RWPE1 (cell line): ENCODE measurements at regions of chr12 and their contacts with region 1.

Region 1: GRCh38 chr12:53995378-53996239 is 4.4 kb upstream of the HOXC9 start:
- DNase-seq: peak; percentile 57
- H3K27ac ChIP-seq: peak overlapping the region; percentile 52
- CTCF ChIP-seq: no peak

Region 2: DNA sequence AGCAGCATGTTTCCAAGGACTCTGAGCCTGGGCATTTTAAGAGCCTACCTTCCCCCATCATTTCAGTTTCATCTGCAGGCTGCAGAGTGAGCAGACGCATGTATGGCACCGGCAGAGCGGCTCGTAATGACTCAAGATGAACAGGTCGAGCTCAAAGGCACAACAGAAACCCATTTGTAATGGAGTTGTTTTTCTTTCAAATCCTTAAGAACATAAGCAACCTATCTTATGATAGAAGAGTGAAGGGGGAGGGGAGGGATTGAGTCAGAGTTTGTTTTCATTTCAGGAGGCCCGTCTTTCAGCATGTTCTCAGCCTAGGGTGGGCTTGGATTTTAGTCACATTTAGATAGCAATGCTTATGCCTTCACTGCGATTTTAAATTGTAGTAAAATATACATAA is 188.9 kb before region 1 on chr12:
- CTCF ChIA-PET with region 1: no interaction called
- POLR2A ChIA-PET with region 1: no interaction called
- DNase-seq: no peak
- H3K27ac ChIP-seq: no peak overlapping the region
- CTCF ChIP-seq: no peak

Region 3: GRCh38 chr12:53984901-53985709 is 10.5 kb before region 1 on chr12 and contains the start of gene HOXC10:
- CTCF ChIA-PET with region 1: interaction called, 11 read pairs
- POLR2A ChIA-PET with region 1: interaction called, 3 read pairs
- DNase-seq: peak; percentile 93
- H3K27ac ChIP-seq: no peak within 1 kb of the TSS
- CTCF ChIP-seq: peak; percentile 69

Region 4: DNA sequence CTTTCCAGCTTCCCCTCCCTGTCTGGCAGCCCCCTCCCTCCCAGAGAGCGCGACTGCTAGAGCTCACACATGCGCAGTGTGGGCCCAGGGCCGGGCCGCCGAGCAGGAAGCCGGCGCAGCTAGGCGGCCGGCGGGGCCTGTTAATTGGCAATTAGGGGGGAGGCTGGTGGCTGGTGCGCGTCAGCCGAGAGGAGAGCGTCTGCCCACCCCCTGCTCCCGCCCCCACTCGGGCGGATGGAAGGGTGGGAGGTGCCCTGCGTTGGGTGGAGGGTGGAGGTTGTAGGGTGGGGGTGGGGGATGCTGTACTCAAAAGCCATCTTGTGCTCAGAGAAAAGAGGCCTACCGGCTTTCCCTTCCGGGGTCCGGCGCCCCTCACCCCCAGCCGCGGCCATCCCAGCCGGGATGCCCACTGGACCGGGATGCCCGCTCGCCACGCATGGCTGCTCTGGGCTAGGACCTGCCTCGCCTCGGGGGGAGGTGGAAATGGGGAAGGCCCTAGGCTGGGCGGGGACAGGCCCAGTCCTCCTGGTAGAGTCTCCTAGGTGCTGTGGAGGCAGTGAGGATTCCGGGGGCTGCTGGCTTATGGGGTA is 22.4 kb after region 1 on chr12:
- CTCF ChIA-PET with region 1: interaction called, 6 read pairs
- POLR2A ChIA-PET with region 1: interaction called, 10 read pairs
- DNase-seq: peak; percentile 95
- H3K27ac ChIP-seq: peak overlapping the region; percentile 64
- CTCF ChIP-seq: no peak

Region 5: GRCh38 chr12:54068418-54069070 is 72.9 kb after region 1 on chr12:
- CTCF ChIA-PET with region 1: no interaction called
- POLR2A ChIA-PET with region 1: no interaction called
- DNase-seq: peak; percentile 52
- H3K27ac ChIP-seq: no peak overlapping the region
- CTCF ChIP-seq: no peak